ENCODE measurements at regions of chr17 and their contacts with region 1.

Region 1: DNA sequence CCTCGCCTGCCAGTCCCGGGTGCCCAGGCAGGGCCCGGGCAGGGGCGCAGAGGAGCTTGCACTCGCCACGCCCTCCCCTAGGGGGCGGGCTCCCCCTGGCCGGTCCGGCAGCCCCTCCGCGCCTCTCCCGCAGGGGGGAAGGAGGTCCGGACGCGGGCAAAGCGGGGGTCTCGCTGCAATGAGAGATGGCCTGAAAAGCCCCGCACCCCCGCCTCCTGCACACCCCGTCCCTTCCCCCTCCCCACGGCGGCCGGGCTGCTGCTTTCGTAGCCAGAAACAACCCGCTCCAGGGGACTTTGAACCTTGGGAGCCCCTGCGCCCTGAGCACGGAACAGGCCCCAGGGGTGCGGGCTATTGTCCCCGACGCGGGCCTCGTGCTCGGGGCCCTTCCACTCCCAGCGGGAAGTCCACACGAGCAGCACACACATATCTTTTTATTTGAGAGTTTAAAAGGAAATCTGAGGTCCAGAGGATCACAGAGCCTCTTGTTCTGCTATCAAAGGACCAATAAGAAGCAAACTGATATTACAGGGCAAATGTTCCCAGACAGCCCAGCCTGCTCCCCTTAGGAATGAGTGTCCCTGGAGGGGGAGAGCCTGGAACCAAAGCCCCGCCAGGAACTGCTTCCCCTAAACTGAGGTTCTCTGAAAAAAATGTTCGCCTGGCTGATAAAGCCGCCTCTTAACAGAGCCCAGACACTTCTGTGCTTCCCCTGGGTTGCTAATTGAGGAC is 5.8 kb upstream of the CBX4 start:
- DNase-seq: peak in 3 of 10 donors; percentile 72 to 91 (median 79)

Region 2: DNA sequence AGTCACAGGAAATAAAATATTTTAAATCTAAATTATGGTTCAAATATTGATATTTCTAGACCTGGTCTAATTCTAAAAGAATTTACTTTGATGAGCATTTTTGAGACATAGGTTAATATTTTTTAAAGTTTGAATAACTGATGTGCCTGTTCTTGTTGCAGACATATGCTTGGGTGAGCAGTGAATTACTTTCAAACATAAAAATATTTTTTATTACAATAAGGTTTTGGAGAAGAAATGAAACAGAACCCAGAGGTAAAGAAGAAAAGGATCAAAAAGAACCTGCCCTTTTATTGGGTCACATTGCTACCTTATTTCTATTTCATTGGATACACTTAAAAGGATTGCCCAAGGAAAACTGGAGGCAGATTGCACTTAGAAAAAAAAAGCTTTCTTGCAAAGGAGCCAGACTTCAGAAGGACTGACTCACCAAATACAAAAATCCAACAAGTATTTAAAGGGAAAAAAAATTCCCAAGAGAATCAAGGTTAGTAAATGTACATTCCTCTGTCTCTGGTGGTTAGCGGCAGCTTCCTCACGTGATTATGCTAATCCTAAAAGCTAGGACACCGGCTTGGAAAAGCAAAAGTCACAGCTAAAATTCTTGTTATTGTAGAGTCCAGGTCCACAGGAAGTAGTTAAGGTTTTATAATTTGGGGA is 95.7 kb before region 1 on chr17:
- intact Hi-C with region 1: no loop called
- DNase-seq: no peak

Region 3: GRCh38 chr17:79769596-79770520 is 75.2 kb before region 1 on chr17:
- intact Hi-C with region 1: no loop called
- DNase-seq: peak in 2 of 10 donors; percentile 41 to 62

Region 4: GRCh38 chr17:79923974-79924638 is 79.1 kb after region 1 on chr17:
- intact Hi-C with region 1: loop called (anchors 5 kb)
- DNase-seq: peak in 6 of 10 donors; percentile 43 to 95 (median 64)

Region 5: GRCh38 chr17:79970576-79971068 is 125.6 kb after region 1 on chr17:
- intact Hi-C with region 1: loop called (anchors 2 kb)
- DNase-seq: peak in 5 of 10 donors; percentile 13 to 94 (median 69)

Measured in posterior cingulate gyrus (tissue), 11 donors.